ENCODE measurements at regions of chr2 and their contacts with region 1.

Region 1: DNA sequence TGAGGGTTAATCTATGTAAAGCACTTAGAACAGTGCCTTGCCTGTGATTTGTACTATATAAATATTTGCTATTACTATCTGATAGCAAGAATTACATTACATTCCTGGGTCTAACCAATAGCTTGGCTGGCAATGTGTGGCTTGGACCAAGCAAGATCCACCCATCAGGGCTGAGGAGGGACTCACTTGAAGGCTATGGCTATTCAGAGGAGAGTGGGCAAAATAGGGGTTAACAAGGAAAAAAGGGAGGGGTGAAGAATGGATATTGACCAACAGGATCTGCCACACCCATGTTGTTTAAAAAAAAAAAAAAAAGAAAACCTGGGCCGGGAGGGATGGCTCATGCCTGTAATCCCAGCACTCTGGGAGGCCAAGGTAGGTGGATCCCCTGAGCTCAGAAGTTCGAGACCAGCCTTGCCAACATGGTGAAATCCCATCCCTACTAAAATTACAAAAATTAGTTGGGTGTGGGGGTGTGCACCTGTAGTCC is 20.0 kb upstream of the TMBIM1 start:
- DNase-seq: peak; percentile 91 to 96
- H3K4me3 ChIP-seq: no peak overlapping the region
- H3K4me3 Mint-ChIP-seq: peak overlapping the region; percentile 56
- H3K27ac Mint-ChIP-seq: peak overlapping the region; percentile 87
- H3K4me1 ChIP-seq: peaks cover 55% of the 10 kb centered on the region
- H3K4me1 Mint-ChIP-seq: peaks cover 32% of the 10 kb centered on the region
- H3K27me3 ChIP-seq: no peaks in the 10 kb centered on the region
- H3K27me3 Mint-ChIP-seq: no peaks in the 10 kb centered on the region
- CTCF ChIP-seq: no peak

Region 2: GRCh38 chr2:218322895-218323808 is 10.8 kb after region 1 on chr2:
- CTCF ChIA-PET with region 1: interaction called, 3 read pairs
- POLR2A ChIA-PET with region 1: interaction called, 5 read pairs
- intact Hi-C with region 1: loop called (anchors 1 kb)
- DNase-seq: peak; percentile 86 to 88
- H3K4me3 ChIP-seq: peak overlapping the region; percentile 66
- H3K4me3 Mint-ChIP-seq: peak overlapping the region; percentile 92
- H3K27ac Mint-ChIP-seq: peak overlapping the region; percentile 85
- H3K4me1 ChIP-seq: peaks cover 21% of the 10 kb centered on the region
- H3K4me1 Mint-ChIP-seq: peaks cover 15% of the 10 kb centered on the region
- H3K27me3 ChIP-seq: no peaks in the 10 kb centered on the region
- H3K27me3 Mint-ChIP-seq: no peaks in the 10 kb centered on the region
- CTCF ChIP-seq: no peak

Region 3: DNA sequence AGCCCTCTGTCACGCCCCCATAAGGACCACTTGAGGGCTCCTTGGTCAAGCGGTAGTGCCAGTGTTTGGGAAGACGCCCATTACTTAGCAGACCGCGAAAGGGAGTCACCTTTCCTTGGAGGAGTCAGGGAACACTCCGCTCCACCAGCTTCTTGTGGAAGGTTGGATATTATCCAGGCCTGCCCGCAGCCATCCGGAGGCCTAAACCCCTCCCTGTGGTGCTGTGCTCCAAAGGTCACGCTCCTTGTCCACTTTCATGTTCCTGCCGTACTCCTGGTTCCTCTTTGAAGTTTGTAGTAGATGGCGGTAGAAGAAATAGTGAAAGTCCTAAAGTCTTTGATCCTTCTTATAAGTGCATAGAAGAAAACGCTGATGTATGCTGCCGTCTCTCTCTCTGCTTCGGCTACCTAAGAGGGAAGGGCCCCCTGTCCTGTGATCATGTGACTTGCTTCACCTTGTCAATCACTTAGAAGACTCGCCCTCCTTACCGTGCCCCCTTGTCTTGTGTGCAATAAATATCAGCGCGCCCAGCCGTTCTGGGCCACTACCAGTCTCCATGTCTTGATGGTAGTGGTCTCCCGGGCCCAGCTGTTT is 42.6 kb after region 1 on chr2:
- CTCF ChIA-PET with region 1: interaction called, 15 read pairs
- POLR2A ChIA-PET with region 1: no interaction called
- intact Hi-C with region 1: loop called (anchors 1 kb)
- DNase-seq: peak; percentile 71 to 84
- H3K4me3 ChIP-seq: no peak overlapping the region
- H3K4me3 Mint-ChIP-seq: peak overlapping the region; percentile 34
- H3K27ac Mint-ChIP-seq: peak overlapping the region; percentile 13
- H3K4me1 ChIP-seq: peaks cover 48% of the 10 kb centered on the region
- H3K4me1 Mint-ChIP-seq: peaks cover 24% of the 10 kb centered on the region
- H3K27me3 ChIP-seq: no peaks in the 10 kb centered on the region
- H3K27me3 Mint-ChIP-seq: no peaks in the 10 kb centered on the region
- CTCF ChIP-seq: no peak

Region 4: GRCh38 chr2:218360447-218360846 is 48.1 kb after region 1 on chr2:
- CTCF ChIA-PET with region 1: interaction called, 15 read pairs
- POLR2A ChIA-PET with region 1: no interaction called
- intact Hi-C with region 1: loop called (anchors 1 kb)
- DNase-seq: no peak
- H3K4me3 ChIP-seq: no peak overlapping the region
- H3K4me3 Mint-ChIP-seq: no peak overlapping the region
- H3K27ac Mint-ChIP-seq: peak overlapping the region; percentile 48
- H3K4me1 ChIP-seq: peaks cover 50% of the 10 kb centered on the region
- H3K4me1 Mint-ChIP-seq: peaks cover 18% of the 10 kb centered on the region
- H3K27me3 ChIP-seq: no peaks in the 10 kb centered on the region
- H3K27me3 Mint-ChIP-seq: no peaks in the 10 kb centered on the region
- CTCF ChIP-seq: no peak

Measured in Caco-2 (cell line).